Motor neuron (in vitro differentiated cells): ENCODE measurements at regions of chr5 and their contacts with region 1.

Region 1: GRCh38 chr5:68315679-68316271 is 100.2 kb downstream of the PIK3R1 start:
- ATAC-seq: peak in 3 of 8 experiments; percentile 49 to 74 (median 51)
- H3K4me3 ChIP-seq: no peak overlapping the region
- H3K27ac ChIP-seq: no peak overlapping the region
- H3K4me1 ChIP-seq: no peaks in the 10 kb centered on the region

Region 2: DNA sequence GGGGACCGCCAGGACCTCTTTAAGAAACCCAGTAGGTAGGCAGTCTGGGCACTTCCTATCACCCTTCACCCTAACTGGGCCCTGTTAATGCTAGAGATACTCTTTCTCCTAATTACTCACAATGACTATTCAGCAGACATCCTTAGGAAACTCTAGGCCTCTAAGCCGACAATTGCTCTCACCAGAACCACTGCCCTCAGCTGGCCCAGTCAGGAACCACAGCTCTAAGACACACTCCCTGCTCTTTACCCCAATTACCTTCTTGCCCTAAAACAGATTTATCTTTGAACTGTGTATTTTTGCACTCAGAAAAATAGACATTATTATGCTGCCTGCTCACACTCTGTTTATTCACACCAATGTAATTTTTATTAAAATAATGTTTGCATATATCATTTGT is 345.5 kb after region 1 on chr5:
- in situ Hi-C with region 1: loop called in 1 of 9 experiments (anchors 25 kb)
- ATAC-seq: peak in 2 of 8 experiments; percentile 21 to 35
- H3K4me3 ChIP-seq: no peak overlapping the region
- H3K27ac ChIP-seq: no peak overlapping the region
- H3K4me1 ChIP-seq: peaks cover 12 to 22% of the 10 kb centered on the region in 2 donors